Activated T-helper 1 cell treated with anti-CD3 and anti-CD28 coated beads, Interleukin-12 subunit alpha, Interleukin-12 subunit beta, Interleukin-2, Interleukin-4 antibody, amounts not matched to agents 30 ng/mL and 10 ng/mL and 1 ng/mL, durations not matched to agents 14 hours and 24 hours and 36 hours (primary cell): ENCODE measurements at regions of chr1 and their contacts with region 1.

Region 1: DNA sequence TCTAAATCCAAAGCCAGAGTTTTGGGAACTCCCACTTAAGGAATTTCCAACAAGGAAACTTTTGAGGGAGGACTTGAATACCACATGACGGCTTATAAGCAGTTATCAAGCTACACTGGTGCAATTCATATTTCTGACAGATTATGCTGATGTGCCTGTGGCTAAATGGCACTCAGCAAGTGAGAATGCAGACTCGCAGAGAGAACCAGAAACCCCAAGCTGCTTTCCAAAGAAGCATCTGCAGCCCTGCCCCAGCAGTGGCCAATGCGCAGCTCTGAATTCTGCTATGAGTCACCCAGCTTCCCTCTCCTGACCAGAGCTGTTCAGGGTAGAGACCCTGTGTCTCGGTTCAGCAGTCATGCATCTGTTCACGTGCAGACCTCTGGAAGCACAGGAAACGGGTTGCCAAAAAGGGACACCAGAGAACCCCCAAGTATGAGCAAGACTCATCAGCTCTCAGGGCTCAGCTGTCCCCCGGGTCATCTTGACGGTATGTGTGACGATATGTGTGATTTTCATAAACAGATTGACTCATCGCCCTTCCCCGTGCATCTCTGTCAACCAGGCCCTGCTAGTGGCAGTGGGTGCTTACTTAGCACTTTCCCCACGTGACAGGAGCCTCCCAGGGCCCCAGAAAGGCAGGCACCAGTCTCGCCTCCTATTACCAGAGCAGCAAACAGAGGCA is 76.3 kb downstream of the ITPKB start:
- DNase-seq: peak; percentile 78
- H3K4me3 Mint-ChIP-seq: peak overlapping the region; percentile 58
- H3K27ac Mint-ChIP-seq: peak overlapping the region; percentile 86
- H3K4me1 Mint-ChIP-seq: peaks cover 77% of the 10 kb centered on the region
- H3K27me3 Mint-ChIP-seq: no peaks in the 10 kb centered on the region

Region 2: DNA sequence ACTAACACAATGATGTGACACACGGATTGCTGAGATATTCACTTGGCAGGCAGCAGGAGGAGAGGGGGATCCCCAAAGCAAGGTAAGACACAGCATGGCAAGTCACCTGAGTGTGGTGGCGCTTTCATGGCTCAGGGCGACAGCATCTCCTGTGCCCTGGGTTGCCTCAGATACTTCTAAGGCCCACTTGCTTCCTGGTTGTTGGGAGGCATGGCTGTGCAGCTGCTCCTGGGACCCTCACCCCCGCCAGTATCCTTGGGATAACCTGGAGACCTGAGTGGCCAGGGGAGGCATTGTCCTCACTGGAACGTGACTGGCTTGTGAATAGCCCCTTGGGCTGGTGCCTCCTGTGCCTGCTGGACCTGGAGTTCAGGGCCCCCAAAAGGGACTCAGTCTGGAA is 44.4 kb before region 1 on chr1:
- intact Hi-C with region 1: no loop called
- DNase-seq: no peak
- H3K4me3 Mint-ChIP-seq: no peak overlapping the region
- H3K27ac Mint-ChIP-seq: no peak overlapping the region
- H3K4me1 Mint-ChIP-seq: no peaks in the 10 kb centered on the region
- H3K27me3 Mint-ChIP-seq: peaks cover 13% of the 10 kb centered on the region

Region 3: GRCh38 chr1:226634166-226634588 is 28.6 kb before region 1 on chr1:
- intact Hi-C with region 1: loop called (anchors 2 kb)
- DNase-seq: peak; percentile 66
- H3K4me3 Mint-ChIP-seq: no peak overlapping the region
- H3K27ac Mint-ChIP-seq: peak overlapping the region; percentile 31
- H3K4me1 Mint-ChIP-seq: peaks cover 34% of the 10 kb centered on the region
- H3K27me3 Mint-ChIP-seq: no peaks in the 10 kb centered on the region

Region 4: DNA sequence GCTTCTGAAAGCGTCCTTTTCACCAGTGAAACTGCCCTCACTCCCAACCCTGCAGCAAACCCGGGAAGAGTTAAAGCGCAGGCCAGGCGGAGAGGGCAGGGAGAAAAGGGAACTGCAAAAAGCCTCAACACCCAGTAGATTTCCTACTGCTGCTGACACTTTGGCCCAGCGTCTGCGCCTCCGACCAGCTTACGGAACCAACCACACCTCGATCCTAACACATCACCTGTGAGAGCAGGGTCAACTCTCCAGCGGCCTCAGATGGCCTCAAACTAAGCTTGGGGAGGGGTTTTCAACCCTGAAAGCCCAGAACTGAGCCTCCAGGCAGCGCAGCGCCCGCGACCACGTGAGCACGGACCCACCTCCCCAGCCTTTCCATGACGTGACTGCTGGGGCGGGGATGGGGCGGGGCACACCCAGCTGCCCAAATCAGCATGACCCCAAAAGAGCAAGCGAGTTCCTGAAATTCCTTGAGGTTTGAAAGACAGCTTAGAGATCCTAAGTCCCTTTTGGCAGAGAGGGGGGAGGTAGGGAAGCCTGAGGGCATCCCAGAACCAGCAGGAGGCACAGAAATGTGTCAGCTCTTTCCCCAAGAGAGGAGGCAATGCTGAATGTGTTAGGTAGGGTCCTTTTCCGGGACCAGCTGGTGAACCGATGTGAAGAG is 17.2 kb after region 1 on chr1:
- intact Hi-C with region 1: loop called (anchors 1 kb)
- DNase-seq: peak; percentile 65
- H3K4me3 Mint-ChIP-seq: peak overlapping the region; percentile 82
- H3K27ac Mint-ChIP-seq: peak overlapping the region; percentile 97
- H3K4me1 Mint-ChIP-seq: peaks cover 97% of the 10 kb centered on the region
- H3K27me3 Mint-ChIP-seq: no peaks in the 10 kb centered on the region

Region 5: DNA sequence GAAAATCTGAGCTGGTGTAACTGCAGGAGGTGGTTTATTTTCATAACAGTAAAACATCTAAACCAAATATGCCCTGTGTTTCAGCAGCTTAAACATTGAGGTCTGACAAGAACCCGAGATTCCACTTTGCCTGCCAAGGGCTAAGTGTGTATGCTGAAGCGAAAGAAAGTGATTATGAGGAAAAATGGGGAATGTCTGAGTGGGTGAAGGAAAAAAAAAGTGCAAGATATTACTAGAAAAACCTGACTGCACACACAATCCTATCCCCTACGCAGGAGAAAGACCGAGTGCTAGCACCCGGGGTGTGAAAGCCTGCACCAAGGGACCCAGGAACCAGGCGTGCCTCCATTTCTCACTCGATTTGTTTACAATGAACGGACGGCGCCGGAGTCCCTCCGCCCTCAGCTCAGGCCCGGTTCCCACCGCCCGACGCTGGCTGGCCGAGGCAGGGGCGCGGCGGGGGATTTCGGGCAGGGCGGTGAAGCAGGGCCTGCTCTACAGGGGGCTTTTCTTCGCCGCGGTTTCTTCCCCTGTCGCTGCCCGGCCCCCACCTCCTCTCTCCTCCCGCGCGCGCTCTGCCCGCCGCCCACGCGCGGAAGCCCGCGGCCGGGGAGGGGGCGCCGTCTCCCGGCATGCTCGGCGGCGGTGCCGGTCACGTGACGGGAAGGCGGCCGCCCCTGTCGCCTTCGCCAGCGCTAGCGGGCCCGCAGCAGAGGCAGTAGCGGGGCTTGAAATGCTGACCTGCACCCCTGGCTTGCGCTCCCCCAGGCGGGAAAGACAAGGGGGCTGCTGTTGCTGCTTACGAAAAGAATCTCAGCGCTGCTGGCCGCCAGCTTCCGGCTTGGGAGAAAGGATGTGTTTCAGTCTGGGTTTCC is 40.4 kb after region 1 on chr1:
- intact Hi-C with region 1: loop called (anchors 1 kb)
- DNase-seq: peak; percentile 81
- H3K4me3 Mint-ChIP-seq: peak overlapping the region; percentile 77
- H3K27ac Mint-ChIP-seq: peak overlapping the region; percentile 89
- H3K4me1 Mint-ChIP-seq: peaks cover 57% of the 10 kb centered on the region
- H3K27me3 Mint-ChIP-seq: no peaks in the 10 kb centered on the region

Region 6: DNA sequence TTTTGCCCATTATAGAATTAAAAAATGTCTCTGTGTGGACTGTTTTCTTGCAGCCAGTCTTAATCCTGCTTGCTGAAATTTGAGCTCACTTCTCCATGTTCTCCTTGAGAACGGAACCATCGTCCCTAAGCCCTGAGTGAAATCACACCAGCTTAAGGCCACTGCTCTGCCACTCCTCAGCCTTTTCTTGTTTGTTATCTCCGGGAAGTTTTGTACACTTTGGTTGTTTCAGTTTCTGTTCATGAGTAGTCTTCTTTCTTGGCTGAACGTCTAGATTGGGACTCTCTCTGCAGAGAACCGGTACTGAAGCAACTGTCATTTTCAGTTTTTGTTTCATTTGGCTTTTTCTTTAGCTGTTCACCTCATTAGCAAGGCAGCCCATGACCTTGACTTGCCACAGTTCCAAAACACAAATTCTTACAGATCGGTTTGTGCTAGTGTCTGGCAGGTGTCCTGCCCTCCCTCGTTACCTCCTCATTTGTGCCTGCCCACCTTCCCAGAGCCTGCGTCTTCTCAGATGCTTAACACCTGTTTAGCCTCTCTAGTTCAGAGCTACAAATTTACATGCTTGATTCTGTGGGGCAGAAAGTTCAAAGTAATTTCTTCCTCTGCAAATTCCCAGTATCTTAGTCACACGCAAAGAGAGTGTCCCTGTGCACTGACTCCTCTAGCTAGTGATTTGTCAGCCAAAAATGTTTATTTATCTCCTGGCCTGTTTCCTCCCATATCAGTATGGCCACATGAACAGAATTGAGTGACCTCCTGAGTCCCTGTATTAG is 220.0 kb after region 1 on chr1:
- intact Hi-C with region 1: loop called (anchors 1 kb)
- DNase-seq: peak; percentile 40
- H3K4me3 Mint-ChIP-seq: peak overlapping the region; percentile 48
- H3K27ac Mint-ChIP-seq: peak overlapping the region; percentile 87
- H3K4me1 Mint-ChIP-seq: peaks cover 60% of the 10 kb centered on the region
- H3K27me3 Mint-ChIP-seq: no peaks in the 10 kb centered on the region